Activated B cell treated with CpG ODN at 0.5 μM for 24 hours (primary cell): ENCODE measurements at regions of chr2 and their contacts with region 1.

Region 1: GRCh38 chr2:60707750-60708371 is 48.2 kb upstream of the PAPOLG start:
- DNase-seq: no peak
- ATAC-seq: peak; percentile 28
- H3K4me3 Mint-ChIP-seq: no peak overlapping the region
- H3K27ac Mint-ChIP-seq: no peak overlapping the region
- H3K4me1 Mint-ChIP-seq: no peaks in the 10 kb centered on the region
- H3K27me3 Mint-ChIP-seq: peaks cover 5% of the 10 kb centered on the region
- CTCF ChIP-seq: no peak

Region 2: GRCh38 chr2:60247471-60247870 is 460.4 kb before region 1 on chr2:
- CTCF ChIA-PET with region 1: no interaction called
- POLR2A ChIA-PET with region 1: no interaction called
- intact Hi-C with region 1: no loop called
- DNase-seq: no peak
- ATAC-seq: no peak
- H3K4me3 Mint-ChIP-seq: no peak overlapping the region
- H3K27ac Mint-ChIP-seq: no peak overlapping the region
- H3K4me1 Mint-ChIP-seq: no peaks in the 10 kb centered on the region
- H3K27me3 Mint-ChIP-seq: no peaks in the 10 kb centered on the region
- CTCF ChIP-seq: no peak

Region 3: GRCh38 chr2:60608679-60609078 is 99.2 kb before region 1 on chr2:
- CTCF ChIA-PET with region 1: no interaction called
- POLR2A ChIA-PET with region 1: no interaction called
- intact Hi-C with region 1: no loop called
- DNase-seq: no peak
- ATAC-seq: no peak
- H3K4me3 Mint-ChIP-seq: no peak overlapping the region
- H3K27ac Mint-ChIP-seq: no peak overlapping the region
- H3K4me1 Mint-ChIP-seq: no peaks in the 10 kb centered on the region
- H3K27me3 Mint-ChIP-seq: peaks cover 16% of the 10 kb centered on the region
- CTCF ChIP-seq: no peak

Region 4: GRCh38 chr2:60794277-60794863 is 86.5 kb after region 1 on chr2:
- CTCF ChIA-PET with region 1: interaction called, 5 read pairs
- POLR2A ChIA-PET with region 1: no interaction called
- intact Hi-C with region 1: loop called (anchors 2 kb)
- DNase-seq: no peak
- ATAC-seq: peak; percentile 46
- H3K4me3 Mint-ChIP-seq: no peak overlapping the region
- H3K27ac Mint-ChIP-seq: no peak overlapping the region
- H3K4me1 Mint-ChIP-seq: peaks cover 31% of the 10 kb centered on the region
- H3K27me3 Mint-ChIP-seq: no peaks in the 10 kb centered on the region
- CTCF ChIP-seq: peak; percentile 46

Region 5: DNA sequence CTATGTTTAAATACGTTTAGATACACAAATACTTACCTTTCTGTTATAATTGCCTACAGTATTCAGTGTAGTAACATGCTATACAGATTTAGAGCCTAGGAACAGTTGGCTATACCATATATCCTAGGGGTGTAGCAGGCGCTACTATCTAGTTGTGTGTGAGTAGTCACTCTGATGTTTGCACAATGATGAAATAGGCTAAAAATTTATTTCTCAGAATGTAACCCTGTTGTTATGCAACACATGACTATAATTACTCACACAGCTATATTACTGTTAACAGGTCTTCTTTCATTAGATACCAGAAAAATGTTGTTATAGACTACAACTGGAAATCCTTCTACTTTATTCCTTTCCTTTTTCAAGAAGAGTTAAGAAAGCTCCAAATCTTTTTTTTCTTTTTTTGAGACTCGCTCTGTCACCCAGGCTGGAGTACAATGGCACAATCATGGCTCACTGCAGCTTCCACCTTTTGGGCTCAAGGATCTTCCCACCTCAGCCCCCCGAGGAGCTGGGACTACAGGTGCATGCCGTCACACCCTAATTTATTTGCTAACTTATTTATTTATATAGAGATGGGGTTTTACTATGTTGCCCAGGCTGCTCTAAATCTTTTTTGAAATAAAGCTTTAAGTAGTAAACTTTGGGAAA is 502.6 kb after region 1 on chr2:
- CTCF ChIA-PET with region 1: no interaction called
- POLR2A ChIA-PET with region 1: no interaction called
- intact Hi-C with region 1: loop called (anchors 10 kb)
- DNase-seq: no peak
- ATAC-seq: no peak
- H3K4me3 Mint-ChIP-seq: no peak overlapping the region
- H3K27ac Mint-ChIP-seq: no peak overlapping the region
- H3K4me1 Mint-ChIP-seq: no peaks in the 10 kb centered on the region
- H3K27me3 Mint-ChIP-seq: no peaks in the 10 kb centered on the region
- CTCF ChIP-seq: no peak